ENCODE measurements at regions of chr14 and their contacts with region 1.

Region 1: DNA sequence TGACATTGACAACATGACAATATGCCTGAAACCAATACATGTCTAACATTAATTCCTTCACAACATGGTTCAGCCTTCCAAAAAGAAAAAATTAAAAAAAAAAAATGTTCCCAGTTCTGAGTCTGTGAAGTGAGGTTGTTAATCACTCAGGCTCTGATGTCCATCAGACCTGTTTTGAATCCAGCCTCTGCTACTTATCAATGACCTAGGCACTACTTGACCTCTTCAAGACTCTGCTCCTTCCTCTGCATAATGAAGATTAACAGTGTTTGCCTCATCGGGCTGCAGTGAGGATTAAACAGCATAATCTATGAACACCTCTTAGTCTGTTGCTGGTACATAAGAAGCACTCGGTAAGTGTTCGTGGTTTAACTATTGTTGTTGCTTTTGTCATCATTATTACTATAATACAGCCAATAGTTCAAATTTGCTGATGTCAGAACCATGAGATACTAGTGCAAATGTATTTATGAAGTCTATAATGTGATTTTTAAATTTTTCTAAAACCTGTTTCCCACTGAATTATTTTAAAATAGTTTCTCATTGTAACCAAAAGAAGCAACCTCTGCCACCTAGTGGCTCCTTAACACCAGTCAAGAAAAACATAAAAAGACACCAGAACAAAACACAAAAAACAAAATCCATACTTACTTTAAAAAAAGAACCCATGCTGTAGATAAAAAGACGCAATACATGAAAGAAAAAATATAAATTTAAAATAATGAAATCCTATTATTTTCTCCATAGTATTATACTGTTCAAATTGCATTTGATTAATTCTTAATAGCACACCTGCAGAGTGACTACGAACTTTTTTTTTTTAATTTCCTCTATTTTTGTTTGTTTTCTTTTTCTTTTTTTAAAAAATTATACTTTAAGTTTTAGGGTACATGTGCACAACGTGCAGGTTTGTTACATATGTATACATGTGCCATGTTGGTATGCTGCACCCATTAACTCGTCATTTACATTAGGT is 20.3 kb upstream of the TMX1 start:
- DNase-seq: no peak
- ATAC-seq: no peak
- H3K4me3 ChIP-seq: no peak overlapping the region
- H3K4me3 Mint-ChIP-seq: no peak overlapping the region
- H3K27ac ChIP-seq: no peak overlapping the region
- H3K27ac Mint-ChIP-seq: no peak overlapping the region
- H3K4me1 ChIP-seq: no peaks in the 10 kb centered on the region
- H3K4me1 Mint-ChIP-seq: no peaks in the 10 kb centered on the region
- H3K27me3 ChIP-seq: peaks cover 0 to 4% of the 10 kb centered on the region in 2 experiments
- H3K27me3 Mint-ChIP-seq: no peaks in the 10 kb centered on the region
- CTCF ChIP-seq: peak; percentile 3

Region 2: DNA sequence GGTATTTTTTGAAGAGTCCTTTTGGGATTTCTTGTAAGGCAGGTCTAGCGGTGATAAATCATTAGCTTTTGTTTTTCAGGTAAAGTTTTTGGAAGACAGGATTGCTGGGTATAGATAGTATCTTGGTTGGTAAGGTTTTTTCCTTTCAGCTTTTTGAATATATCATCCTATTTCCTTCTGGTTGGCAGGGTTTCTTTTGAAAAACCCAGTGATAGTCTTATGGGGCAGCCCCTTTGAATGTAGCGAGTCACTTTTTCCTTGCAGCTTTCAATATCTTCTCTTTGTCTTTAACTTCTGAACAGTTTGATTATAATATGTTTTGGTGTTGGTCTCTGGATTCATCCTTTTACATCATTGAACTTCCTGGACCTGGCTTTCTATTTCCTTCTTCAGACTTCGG is 40.5 kb after region 1 on chr14:
- CTCF ChIA-PET with region 1: no interaction called
- POLR2A ChIA-PET with region 1: no interaction called
- intact Hi-C with region 1: loop called in 1 of 2 experiments (anchors 1 kb)
- DNase-seq: no peak
- ATAC-seq: no peak
- H3K4me3 ChIP-seq: no peak overlapping the region
- H3K4me3 Mint-ChIP-seq: no peak overlapping the region
- H3K27ac ChIP-seq: no peak overlapping the region
- H3K27ac Mint-ChIP-seq: no peak overlapping the region
- H3K4me1 ChIP-seq: no peaks in the 10 kb centered on the region
- H3K4me1 Mint-ChIP-seq: no peaks in the 10 kb centered on the region
- H3K27me3 ChIP-seq: no peaks in the 10 kb centered on the region
- H3K27me3 Mint-ChIP-seq: no peaks in the 10 kb centered on the region
- CTCF ChIP-seq: no peak

Region 3: DNA sequence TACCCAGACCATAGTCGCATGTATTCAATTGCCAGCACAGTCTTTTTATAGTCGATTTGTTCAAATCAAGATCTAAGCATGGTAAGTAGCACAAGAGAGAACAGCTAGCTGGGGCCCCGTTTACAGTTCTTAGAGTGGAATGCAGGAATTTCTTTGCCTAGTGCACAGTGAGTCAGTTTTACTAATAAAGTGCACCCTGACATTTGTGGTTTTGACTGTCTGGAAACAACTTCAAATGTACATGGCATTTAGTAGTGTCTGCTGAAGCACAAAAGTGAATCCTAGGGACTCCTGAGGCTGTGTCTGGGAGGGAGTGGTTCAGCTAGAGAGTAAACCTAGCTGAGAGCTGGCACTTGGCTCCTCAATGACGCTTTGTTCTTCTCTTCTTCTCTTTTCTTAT is 85.2 kb after region 1 on chr14:
- CTCF ChIA-PET with region 1: no interaction called
- POLR2A ChIA-PET with region 1: no interaction called
- intact Hi-C with region 1: loop called in 1 of 2 experiments (anchors 2 kb)
- DNase-seq: no peak
- ATAC-seq: no peak
- H3K4me3 ChIP-seq: no peak overlapping the region
- H3K4me3 Mint-ChIP-seq: no peak overlapping the region
- H3K27ac ChIP-seq: no peak overlapping the region
- H3K27ac Mint-ChIP-seq: no peak overlapping the region
- H3K4me1 ChIP-seq: no peaks in the 10 kb centered on the region
- H3K4me1 Mint-ChIP-seq: no peaks in the 10 kb centered on the region
- H3K27me3 ChIP-seq: peaks cover 0 to 2% of the 10 kb centered on the region in 2 experiments
- H3K27me3 Mint-ChIP-seq: peaks cover 10% of the 10 kb centered on the region
- CTCF ChIP-seq: no peak